Prostate gland (tissue), 2 donors: ENCODE measurements at regions of chr18 and their contacts with region 1.

Region 1: DNA sequence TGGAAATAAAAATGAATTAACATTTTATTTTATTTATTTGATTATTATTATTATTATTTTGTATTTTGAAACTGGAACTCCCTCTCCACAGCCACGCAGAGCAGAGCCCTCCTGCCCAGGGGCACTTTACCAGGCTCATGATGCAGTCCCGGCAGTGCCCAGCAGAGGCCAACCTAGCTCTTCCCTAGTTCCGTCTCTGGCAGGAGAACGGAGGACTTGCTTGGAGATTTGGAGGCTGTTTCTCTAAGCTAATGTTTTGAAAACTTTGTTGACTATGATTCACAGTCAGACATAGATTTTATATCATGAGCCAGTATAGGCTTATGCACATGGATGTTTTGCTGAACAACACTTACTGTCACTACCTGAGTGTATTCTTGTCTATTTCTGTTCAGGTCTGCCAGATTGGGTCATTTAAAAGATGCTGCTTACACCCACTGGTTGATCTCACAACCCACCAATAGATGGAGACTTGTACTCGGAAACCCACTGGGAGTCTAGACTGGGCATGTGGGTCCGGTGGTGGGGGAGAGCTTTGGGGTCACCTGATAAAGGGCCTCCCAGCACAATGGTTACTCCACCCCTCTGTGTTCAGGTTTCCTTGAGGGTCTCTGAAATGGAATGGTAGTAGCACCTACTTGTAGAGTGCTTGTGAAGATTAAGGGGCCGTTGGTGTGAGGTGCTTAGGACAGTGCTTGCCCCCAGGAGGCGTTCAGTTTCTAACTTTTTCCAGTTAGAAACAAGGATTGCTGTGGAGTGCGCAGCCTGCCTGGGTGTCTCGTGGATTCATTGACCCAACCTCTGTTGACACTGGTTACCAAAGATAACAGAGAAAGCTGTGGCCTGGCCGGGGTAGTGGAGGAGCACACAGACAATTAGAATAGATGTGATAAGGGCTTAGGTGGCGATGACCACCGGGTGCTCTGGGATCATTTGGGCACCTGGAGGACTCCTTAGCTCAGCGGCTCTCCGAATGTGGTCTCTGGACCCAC is 177.3 kb downstream of the HAUS1 start:
- DNase-seq: peak; percentile 64
- H3K4me3 ChIP-seq: no peak overlapping the region
- H3K27ac ChIP-seq: no peak overlapping the region
- H3K4me1 ChIP-seq: no peaks in the 10 kb centered on the region
- H3K27me3 ChIP-seq: no peaks in the 10 kb centered on the region
- CTCF ChIP-seq: peak; percentile 49 to 86 (median 83)
- POLR2A ChIP-seq: no peak

Region 2: GRCh38 chr18:46199515-46200147 is 81.8 kb before region 1 on chr18:
- intact Hi-C with region 1: no loop called
- DNase-seq: peak; percentile 4
- H3K4me3 ChIP-seq: no peak overlapping the region
- H3K27ac ChIP-seq: no peak overlapping the region
- H3K4me1 ChIP-seq: no peaks in the 10 kb centered on the region
- H3K27me3 ChIP-seq: no peaks in the 10 kb centered on the region
- CTCF ChIP-seq: no peak
- POLR2A ChIP-seq: no peak

Region 3: GRCh38 chr18:46481048-46481846 is 199.8 kb after region 1 on chr18:
- intact Hi-C with region 1: loop called (anchors 1 kb)
- DNase-seq: peak; percentile 52
- H3K4me3 ChIP-seq: no peak overlapping the region
- H3K27ac ChIP-seq: no peak overlapping the region
- H3K4me1 ChIP-seq: no peaks in the 10 kb centered on the region
- H3K27me3 ChIP-seq: peaks cover 3% of the 10 kb centered on the region
- CTCF ChIP-seq: peak; percentile 62 to 80 (median 72)
- POLR2A ChIP-seq: no peak

Region 4: GRCh38 chr18:46657115-46657955 is 375.9 kb after region 1 on chr18 and contains the start of gene LOXHD1:
- intact Hi-C with region 1: loop called (anchors 5 kb)
- DNase-seq: no peak
- H3K4me3 ChIP-seq: no peak within 1 kb of the TSS
- H3K27ac ChIP-seq: no peak within 1 kb of the TSS
- H3K4me1 ChIP-seq: no peaks in the 10 kb centered on the region
- H3K27me3 ChIP-seq: no peaks in the 10 kb centered on the region
- CTCF ChIP-seq: no peak
- POLR2A ChIP-seq: no peak
- total RNA-seq, gene LOXHD1: 1.4 TPM in 1 of 2 donors, not detected in the other